OCI-LY7 (cell line): ENCODE measurements at regions of chr12 and their contacts with region 1.

Region 1: DNA sequence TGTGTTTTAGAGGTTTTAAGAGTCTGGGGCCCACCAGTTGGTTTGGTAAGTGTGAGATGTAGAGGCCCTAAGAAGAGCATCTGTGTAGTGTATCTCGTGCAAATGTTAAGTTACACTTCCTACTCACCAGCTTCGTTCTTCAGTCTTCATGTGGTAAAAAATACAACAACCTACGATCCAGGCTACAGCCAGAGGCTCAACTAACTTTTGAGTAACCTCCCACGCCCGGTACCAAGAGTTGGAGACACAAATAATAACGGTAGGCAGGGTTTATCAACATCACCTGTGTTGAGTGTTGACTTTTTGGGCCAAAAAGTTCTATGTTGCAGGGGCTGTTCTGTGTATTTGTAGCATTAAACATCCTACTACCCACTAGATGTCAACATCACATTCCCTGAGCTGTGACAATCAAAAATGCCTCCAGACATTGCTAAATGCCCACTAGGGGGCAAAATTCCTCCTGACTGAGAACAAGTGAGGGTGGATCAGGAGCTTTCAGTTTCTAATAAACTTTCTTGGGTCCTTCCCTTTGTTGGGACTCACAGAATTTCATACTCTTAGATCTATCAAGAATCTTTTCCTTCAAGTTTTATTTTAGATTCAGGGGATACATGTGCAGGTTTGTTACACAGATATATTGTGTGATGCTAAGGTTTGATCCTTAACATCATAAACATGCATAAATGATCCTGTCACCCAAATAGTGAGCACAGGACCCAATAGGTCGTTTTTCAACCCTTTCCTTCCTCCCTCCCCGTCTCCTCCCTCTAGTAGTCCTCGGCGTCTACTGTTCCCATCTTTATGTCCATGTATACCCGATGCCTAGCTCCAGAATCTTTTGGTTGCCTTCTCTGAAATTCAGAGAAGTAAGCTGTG is 94.7 kb downstream of the SLC2A13 start:
- DNase-seq: peak; percentile 86
- H3K4me3 ChIP-seq: peak overlapping the region; percentile 41
- H3K27ac ChIP-seq: no peak overlapping the region
- H3K4me1 ChIP-seq: peaks cover 6% of the 10 kb centered on the region
- CTCF ChIP-seq: peak; percentile 98

Region 2: GRCh38 chr12:40312982-40313576 is 301.9 kb after region 1 on chr12:
- CTCF ChIA-PET with region 1: no interaction called
- POLR2A ChIA-PET with region 1: no interaction called
- intact Hi-C with region 1: loop called (anchors 1 kb)
- DNase-seq: peak; percentile 54
- H3K4me3 ChIP-seq: no peak overlapping the region
- H3K27ac ChIP-seq: peak overlapping the region; percentile 35
- H3K4me1 ChIP-seq: peaks cover 36% of the 10 kb centered on the region
- CTCF ChIP-seq: peak; percentile 97